ENCODE measurements at regions of chr2 and their contacts with region 1.

Region 1: DNA sequence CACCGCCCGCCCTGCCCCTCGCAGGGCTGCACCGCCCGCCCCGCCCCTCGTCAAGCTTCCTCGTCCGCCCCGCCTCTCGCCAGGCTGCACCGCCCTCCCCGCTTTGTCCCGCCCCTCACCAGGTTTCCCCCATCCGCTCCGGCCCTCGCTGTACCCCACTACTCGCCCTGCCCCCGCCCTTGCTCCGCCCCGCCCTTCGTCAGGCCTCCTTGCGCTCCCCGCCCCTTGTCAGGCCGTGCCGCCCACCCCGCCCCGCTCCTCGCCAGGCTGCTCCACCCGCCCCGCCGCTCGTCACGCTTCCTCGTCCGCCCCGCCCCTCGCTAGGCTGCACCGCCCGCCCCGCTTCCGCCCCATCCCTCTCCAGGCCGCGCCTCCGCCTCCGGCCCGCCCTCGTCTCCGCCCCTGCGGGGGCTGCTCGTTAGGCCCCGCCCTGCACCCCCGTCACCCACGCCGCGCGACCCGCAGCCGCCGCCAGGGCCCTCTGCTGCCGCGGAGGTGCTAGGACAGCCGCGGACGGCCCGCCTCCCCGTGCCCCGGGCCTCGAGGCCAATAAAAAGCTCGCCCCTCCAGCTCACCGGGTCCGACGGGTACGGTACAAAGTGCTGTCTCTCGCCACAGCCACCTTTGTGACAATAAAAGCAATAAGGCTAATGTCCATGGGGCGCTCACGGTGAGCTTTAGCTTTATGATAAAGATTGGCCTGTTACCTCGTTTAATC is 574 bp upstream of the DNPEP start:
- DNase-seq: peak; percentile 95
- H3K4me3 ChIP-seq: peak overlapping the region; percentile 59
- H3K27ac ChIP-seq: no peak overlapping the region
- H3K4me1 ChIP-seq: peaks cover 15% of the 10 kb centered on the region
- CTCF ChIP-seq: peak; percentile 74

Region 2: GRCh38 chr2:219229305-219230058 is 158.8 kb before region 1 on chr2 and contains the starts of genes ANKZF1 and ATG9A:
- CTCF ChIA-PET with region 1: no interaction called
- POLR2A ChIA-PET with region 1: interaction called, 5 read pairs
- intact Hi-C with region 1: loop called (anchors 1 kb)
- DNase-seq: peak; percentile 99
- H3K4me3 ChIP-seq: peak within 1 kb of the TSS; percentile 87
- H3K27ac ChIP-seq: peak within 1 kb of the TSS; percentile 76
- H3K4me1 ChIP-seq: peaks cover 16% of the 10 kb centered on the region
- CTCF ChIP-seq: no peak
- total RNA-seq, gene ANKZF1: 57.8 and 91.0 TPM in 2 replicates
- total RNA-seq, gene ATG9A: 22.2 and 27.7 TPM in 2 replicates

Region 3: GRCh38 chr2:219597552-219598307 is 209.4 kb after region 1 on chr2 and contains the start of gene STK11IP:
- CTCF ChIA-PET with region 1: no interaction called
- POLR2A ChIA-PET with region 1: interaction called, 7 read pairs
- intact Hi-C with region 1: loop called (anchors 5 kb)
- DNase-seq: peak; percentile 96
- H3K4me3 ChIP-seq: peak within 1 kb of the TSS; percentile 77
- H3K27ac ChIP-seq: peak within 1 kb of the TSS; percentile 56
- H3K4me1 ChIP-seq: peaks cover 14% of the 10 kb centered on the region
- CTCF ChIP-seq: no peak
- total RNA-seq, gene STK11IP: 16.5 and 26.5 TPM in 2 replicates

Region 4: GRCh38 chr2:219726916-219727315 is 338.6 kb after region 1 on chr2:
- CTCF ChIA-PET with region 1: no interaction called
- POLR2A ChIA-PET with region 1: no interaction called
- intact Hi-C with region 1: no loop called
- DNase-seq: no peak
- H3K4me3 ChIP-seq: no peak overlapping the region
- H3K27ac ChIP-seq: no peak overlapping the region
- H3K4me1 ChIP-seq: no peaks in the 10 kb centered on the region
- CTCF ChIP-seq: 0 out of 2 replicates have a peak, but pooled peaks have one; percentile 14